RWPE1 (cell line): ENCODE measurements at regions of chr5 and their contacts with region 1.

Region 1: GRCh38 chr5:151037561-151038411 is 17.4 kb downstream of the GPX3 start:
- DNase-seq: no peak
- H3K27ac ChIP-seq: 0 out of 2 replicates have a peak overlapping the region, but pooled peaks have one; percentile 1
- CTCF ChIP-seq: no peak

Region 2: GRCh38 chr5:150689120-150689519 is 348.7 kb before region 1 on chr5:
- CTCF ChIA-PET with region 1: no interaction called
- POLR2A ChIA-PET with region 1: no interaction called
- DNase-seq: no peak
- H3K27ac ChIP-seq: no peak overlapping the region
- CTCF ChIP-seq: no peak

Region 3: GRCh38 chr5:151002250-151002649 is 35.5 kb before region 1 on chr5:
- CTCF ChIA-PET with region 1: interaction called, 18 read pairs
- POLR2A ChIA-PET with region 1: interaction called, 7 read pairs
- DNase-seq: peak; percentile 82
- H3K27ac ChIP-seq: no peak overlapping the region
- CTCF ChIP-seq: peak; percentile 70

Region 4: DNA sequence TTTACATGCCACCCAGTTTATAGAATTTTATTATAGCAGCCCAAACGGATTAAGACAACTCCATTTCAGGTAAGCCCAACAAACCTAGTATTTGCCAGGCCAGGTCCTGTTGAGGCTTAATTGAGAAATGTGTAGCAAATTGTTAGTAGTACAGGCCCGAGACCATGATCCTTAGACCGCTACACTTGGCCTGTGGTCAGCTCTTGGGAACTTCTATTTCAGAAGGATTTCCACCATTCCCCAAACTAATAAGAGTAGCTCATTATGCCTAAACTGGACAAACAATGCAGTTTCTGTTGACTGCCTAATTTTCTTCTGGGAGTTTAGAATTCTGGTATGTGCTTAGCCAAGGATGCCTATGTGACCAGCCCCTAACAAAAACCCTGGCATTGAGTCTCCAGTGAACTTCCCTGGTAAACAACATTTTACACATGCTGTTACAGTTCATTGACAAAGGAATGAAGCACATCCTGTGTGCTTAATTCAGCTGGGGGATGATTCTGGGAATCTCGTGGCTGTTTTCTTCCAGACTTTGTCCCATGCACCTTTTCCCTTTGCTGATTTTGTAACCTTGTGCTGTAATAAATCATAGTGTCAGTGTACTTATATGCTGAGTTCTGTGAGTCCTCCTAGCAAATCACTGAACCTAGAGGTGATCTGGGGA is 23.0 kb before region 1 on chr5:
- CTCF ChIA-PET with region 1: no interaction called
- POLR2A ChIA-PET with region 1: no interaction called
- DNase-seq: no peak
- H3K27ac ChIP-seq: no peak overlapping the region
- CTCF ChIP-seq: no peak

Region 5: GRCh38 chr5:151202381-151203139 is 164.8 kb after region 1 on chr5:
- CTCF ChIA-PET with region 1: no interaction called
- POLR2A ChIA-PET with region 1: no interaction called
- DNase-seq: peak; percentile 93
- H3K27ac ChIP-seq: no peak overlapping the region
- CTCF ChIP-seq: no peak

Region 6: DNA sequence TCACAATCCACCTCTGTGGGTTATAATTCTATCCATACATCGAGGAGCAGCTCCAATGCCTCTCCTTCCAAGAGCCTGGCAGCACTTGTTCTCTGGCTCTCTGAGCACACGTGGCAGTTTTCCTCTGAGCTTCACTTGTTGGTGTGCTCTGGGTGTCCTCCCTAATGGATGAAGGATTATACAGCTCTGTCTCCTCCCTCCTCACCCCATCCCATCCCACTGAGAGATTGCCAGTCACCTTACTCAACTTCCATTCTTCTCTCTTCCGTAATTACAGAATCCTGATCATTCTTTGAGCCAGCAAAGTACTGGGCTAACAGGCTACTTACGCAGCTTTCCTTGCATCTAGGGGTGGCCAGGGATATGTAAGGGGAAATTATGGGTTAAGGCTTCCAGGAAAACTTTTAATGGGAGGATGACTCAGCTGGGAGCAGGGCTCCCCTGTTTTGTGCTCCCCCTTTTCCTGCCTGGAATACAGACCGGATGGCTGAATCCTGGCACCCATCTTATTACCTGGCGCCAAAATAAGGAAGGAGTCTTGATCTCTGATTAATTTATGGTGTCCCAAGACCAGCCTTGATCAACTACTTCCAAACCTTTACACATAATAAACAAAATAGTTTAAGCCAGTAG is 192.4 kb after region 1 on chr5:
- CTCF ChIA-PET with region 1: no interaction called
- POLR2A ChIA-PET with region 1: interaction called, 13 read pairs
- DNase-seq: no peak
- H3K27ac ChIP-seq: no peak overlapping the region
- CTCF ChIP-seq: no peak

Region 7: GRCh38 chr5:151288180-151288579 is 250.4 kb after region 1 on chr5:
- CTCF ChIA-PET with region 1: no interaction called
- POLR2A ChIA-PET with region 1: no interaction called
- DNase-seq: peak; percentile 83
- H3K27ac ChIP-seq: no peak overlapping the region
- CTCF ChIP-seq: no peak